ENCODE measurements at regions of chr9 and their contacts with region 1.

Region 1: GRCh38 chr9:20382460-20383071 is 239.7 kb downstream of the MLLT3 start:
- DNase-seq: no peak
- H3K4me3 Mint-ChIP-seq: no peak overlapping the region
- H3K27ac Mint-ChIP-seq: no peak overlapping the region
- H3K4me1 Mint-ChIP-seq: peaks cover 49% of the 10 kb centered on the region
- H3K27me3 Mint-ChIP-seq: no peaks in the 10 kb centered on the region

Region 2: DNA sequence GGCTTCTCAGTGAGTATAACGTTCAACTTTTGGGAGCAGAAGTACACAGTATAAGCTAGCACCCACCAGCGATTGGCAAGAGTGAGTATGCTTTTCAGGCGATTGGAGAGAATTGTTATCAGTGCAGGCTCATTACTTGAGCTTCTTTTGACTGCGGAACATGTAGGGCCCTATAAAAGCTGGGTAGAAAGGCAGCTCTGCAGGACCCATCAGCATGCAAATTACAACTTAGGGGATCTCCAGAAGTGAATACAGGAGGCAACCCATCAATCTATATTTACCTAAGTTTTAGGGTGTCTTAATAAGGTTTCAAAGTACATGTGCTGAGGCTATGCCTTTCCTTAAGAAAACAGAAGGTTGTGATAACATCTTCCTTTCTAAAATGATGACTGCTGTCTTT is 14.8 kb after region 1 on chr9:
- CTCF ChIA-PET with region 1: interaction called, 3 read pairs
- intact Hi-C with region 1: loop called (anchors 1 kb)
- DNase-seq: no peak
- H3K4me3 Mint-ChIP-seq: no peak overlapping the region
- H3K27ac Mint-ChIP-seq: peak overlapping the region; percentile 75
- H3K4me1 Mint-ChIP-seq: peaks cover 64% of the 10 kb centered on the region
- H3K27me3 Mint-ChIP-seq: no peaks in the 10 kb centered on the region

Region 3: GRCh38 chr9:20437476-20437875 is 54.9 kb after region 1 on chr9:
- CTCF ChIA-PET with region 1: no interaction called
- intact Hi-C with region 1: loop called (anchors 2 kb)
- DNase-seq: no peak
- H3K4me3 Mint-ChIP-seq: no peak overlapping the region
- H3K27ac Mint-ChIP-seq: no peak overlapping the region
- H3K4me1 Mint-ChIP-seq: peaks cover 47% of the 10 kb centered on the region
- H3K27me3 Mint-ChIP-seq: no peaks in the 10 kb centered on the region

Measured in activated naive CD4-positive, alpha-beta T cell treated with anti-CD3 and anti-CD28 coated beads for 36 hours (primary cell).